Activated naive CD4-positive, alpha-beta T cell treated with anti-CD3 and anti-CD28 coated beads for 36 hours (primary cell): ENCODE measurements at regions of chr12 and their contacts with region 1.

Region 1: GRCh38 chr12:54273981-54274380 is 5.9 kb downstream of the CBX5 start:
- DNase-seq: no peak
- H3K4me3 Mint-ChIP-seq: no peak overlapping the region
- H3K27ac Mint-ChIP-seq: no peak overlapping the region
- H3K4me1 Mint-ChIP-seq: peaks cover 76% of the 10 kb centered on the region
- H3K27me3 Mint-ChIP-seq: no peaks in the 10 kb centered on the region

Region 2: GRCh38 chr12:53684654-53685220 is 589.2 kb before region 1 on chr12:
- CTCF ChIA-PET with region 1: no interaction called
- intact Hi-C with region 1: no loop called
- DNase-seq: no peak
- H3K4me3 Mint-ChIP-seq: no peak overlapping the region
- H3K27ac Mint-ChIP-seq: no peak overlapping the region
- H3K4me1 Mint-ChIP-seq: no peaks in the 10 kb centered on the region
- H3K27me3 Mint-ChIP-seq: no peaks in the 10 kb centered on the region

Region 3: DNA sequence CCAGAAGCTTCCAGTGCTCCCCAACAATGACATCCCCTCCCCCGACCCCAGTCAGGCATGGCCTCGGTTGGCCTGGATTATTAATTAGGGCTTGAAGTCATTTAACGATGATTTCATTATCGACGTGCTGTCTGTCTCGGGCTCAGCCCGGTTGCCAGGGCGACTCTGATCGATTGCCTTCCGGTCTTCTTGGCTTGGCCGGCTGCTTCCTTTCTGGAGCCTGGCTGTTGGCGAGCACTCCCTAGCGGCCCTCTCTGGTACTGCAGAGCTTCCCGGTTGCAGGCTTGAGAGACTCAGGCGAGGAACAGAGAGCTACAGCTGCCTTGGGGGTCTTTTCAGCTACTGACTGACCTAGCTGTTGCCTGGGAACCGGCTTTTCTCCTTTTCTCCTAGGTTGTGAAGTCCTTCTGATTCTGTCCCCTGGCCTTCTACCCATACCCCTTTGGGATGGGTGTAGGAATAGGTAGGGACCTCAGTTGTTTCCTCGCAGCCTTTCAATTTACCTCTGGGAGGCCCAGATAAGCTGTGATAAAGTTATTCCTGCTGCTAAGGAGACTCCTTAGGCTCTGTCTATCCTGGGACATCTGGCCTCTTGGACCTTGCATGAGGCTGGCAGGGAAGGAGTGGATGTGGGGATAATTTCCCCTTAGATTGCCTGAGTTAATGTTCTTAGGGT is 516.7 kb before region 1 on chr12:
- CTCF ChIA-PET with region 1: no interaction called
- intact Hi-C with region 1: no loop called
- DNase-seq: peak; percentile 92
- H3K4me3 Mint-ChIP-seq: peak overlapping the region; percentile 44
- H3K27ac Mint-ChIP-seq: no peak overlapping the region
- H3K4me1 Mint-ChIP-seq: peaks cover 7% of the 10 kb centered on the region
- H3K27me3 Mint-ChIP-seq: peaks cover 28% of the 10 kb centered on the region

Region 4: DNA sequence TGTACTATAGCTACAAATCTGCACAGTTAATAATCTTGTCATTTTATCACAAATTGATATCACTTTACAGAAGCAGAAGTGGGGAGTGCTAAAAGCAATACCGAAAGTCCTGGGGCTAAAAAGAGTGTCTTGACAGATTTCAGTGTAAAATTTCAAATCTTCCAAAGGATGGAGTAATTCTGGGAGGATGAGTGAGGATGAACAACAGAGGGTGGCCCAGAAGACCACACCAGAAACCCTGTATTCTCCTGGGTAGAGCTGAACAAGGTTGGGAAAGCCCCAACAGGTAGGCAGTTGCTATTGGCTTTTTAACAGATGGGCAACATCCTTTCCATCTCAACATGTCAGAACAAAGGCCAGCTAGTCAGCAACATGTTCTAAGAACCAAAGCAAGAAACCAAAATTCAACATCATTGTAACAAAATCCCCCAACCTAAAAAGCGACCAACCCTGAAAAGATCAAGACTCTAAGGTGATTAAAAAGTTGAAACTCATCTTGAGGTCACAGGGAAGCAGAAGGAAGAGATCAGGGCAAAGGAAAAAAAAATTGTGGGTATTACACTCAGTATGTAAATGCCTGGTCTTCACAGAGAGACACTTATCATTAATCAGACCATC is 32.9 kb before region 1 on chr12:
- CTCF ChIA-PET with region 1: interaction called, 3 read pairs
- intact Hi-C with region 1: loop called (anchors 1 kb)
- DNase-seq: peak; percentile 16
- H3K4me3 Mint-ChIP-seq: no peak overlapping the region
- H3K27ac Mint-ChIP-seq: peak overlapping the region; percentile 80
- H3K4me1 Mint-ChIP-seq: peaks cover 16% of the 10 kb centered on the region
- H3K27me3 Mint-ChIP-seq: no peaks in the 10 kb centered on the region